ENCODE measurements at regions of chr1 and their contacts with region 1.

Region 1: GRCh38 chr1:108643492-108644335 is 17.2 kb downstream of the HENMT1 start:
- DNase-seq: peak in 10 of 14 experiments; percentile 32 to 86 (median 48)
- ATAC-seq: peak; percentile 24
- H3K4me3 ChIP-seq: no peak overlapping the region
- H3K4me3 Mint-ChIP-seq: peak overlapping the region; percentile 25
- H3K27ac ChIP-seq: peak overlapping the region; percentile 18 to 74
- H3K27ac Mint-ChIP-seq: peak overlapping the region; percentile 96
- H3K4me1 ChIP-seq: peaks cover 61% of the 10 kb centered on the region
- H3K4me1 Mint-ChIP-seq: peaks cover 80% of the 10 kb centered on the region
- H3K27me3 ChIP-seq: no peaks in the 10 kb centered on the region
- H3K27me3 Mint-ChIP-seq: no peaks in the 10 kb centered on the region
- CTCF ChIP-seq: peak; percentile 77

Region 2: DNA sequence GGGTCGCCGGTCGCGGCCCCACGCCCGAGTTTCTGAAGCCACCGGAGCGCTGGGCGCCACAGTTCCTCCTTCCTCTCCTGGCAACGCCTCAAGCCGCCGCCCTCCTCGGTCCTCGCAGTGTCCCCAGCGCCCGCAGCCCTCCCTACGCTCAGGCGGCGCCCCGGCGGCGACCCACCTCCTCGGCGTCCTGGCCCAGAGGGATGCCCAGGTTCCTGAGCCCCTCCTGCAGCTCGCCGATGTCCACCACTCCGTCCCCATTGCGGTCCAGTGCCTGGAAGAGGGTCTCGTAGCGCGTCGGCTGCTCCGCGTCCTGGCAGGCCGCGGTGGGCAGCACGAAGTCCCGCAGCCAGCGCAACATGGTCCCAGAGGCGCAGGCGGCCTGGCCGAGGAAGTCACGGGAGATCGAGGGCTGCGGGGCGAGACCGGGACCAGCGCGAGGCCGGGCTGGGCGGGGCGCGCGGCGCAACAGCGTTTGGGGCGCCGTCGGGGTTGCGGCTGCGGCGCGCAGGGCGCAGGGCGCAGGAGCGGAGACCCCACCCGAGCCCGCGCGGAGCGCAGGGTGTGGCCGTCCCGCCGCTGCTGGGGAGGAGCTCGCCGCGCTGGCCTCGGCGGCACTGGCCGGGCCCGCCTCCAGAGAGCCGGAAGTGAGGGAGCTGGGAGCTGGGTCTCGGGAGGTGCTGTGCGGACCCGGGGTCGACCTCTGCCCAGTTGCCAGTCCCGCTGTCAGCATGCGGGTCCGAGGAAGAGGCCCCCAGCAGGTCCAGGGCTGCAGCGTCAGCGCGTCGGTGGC is 443.7 kb before region 1 on chr1 and contains the start of gene SLC25A24:
- CTCF ChIA-PET with region 1: no interaction called
- POLR2A ChIA-PET with region 1: interaction called, 16 read pairs
- intact Hi-C with region 1: loop called in 1 of 2 experiments (anchors 5 kb)
- DNase-seq: peak; percentile 51 to 89 (median 69)
- ATAC-seq: peak; percentile 92
- H3K4me3 ChIP-seq: peak within 1 kb of the TSS; percentile 97
- H3K4me3 Mint-ChIP-seq: peak within 1 kb of the TSS; percentile 94
- H3K27ac ChIP-seq: peak within 1 kb of the TSS; percentile 42 to 79
- H3K27ac Mint-ChIP-seq: peak within 1 kb of the TSS; percentile 83
- H3K4me1 ChIP-seq: peaks cover 16% of the 10 kb centered on the region
- H3K4me1 Mint-ChIP-seq: peaks cover 34% of the 10 kb centered on the region
- H3K27me3 ChIP-seq: no peaks in the 10 kb centered on the region
- H3K27me3 Mint-ChIP-seq: no peaks in the 10 kb centered on the region
- CTCF ChIP-seq: no peak
- total RNA-seq, gene SLC25A24: 4.9 to 5.5 TPM

Region 3: DNA sequence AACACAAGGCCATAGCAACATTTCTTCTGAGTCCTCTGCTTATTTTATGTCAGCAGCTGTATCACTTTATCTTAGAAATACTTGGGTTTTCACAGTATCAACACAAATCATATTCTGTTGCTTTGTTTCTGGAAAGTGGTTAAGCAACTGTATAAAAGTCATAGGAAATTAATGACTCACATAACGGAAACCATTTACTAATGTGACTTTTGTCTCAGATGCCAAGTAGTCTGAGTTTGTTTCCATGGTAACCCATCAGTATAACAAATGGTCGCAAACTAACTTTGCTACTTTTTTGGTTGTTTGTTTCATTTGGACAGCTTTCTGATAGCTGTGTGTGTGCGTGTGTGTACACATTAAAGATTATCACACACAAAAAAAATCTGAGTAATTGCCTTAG is 52.8 kb before region 1 on chr1:
- CTCF ChIA-PET with region 1: interaction called, 5 read pairs
- POLR2A ChIA-PET with region 1: interaction called, 6 read pairs
- intact Hi-C with region 1: loop called in 1 of 2 experiments (anchors 1 kb)
- DNase-seq: peak in 4 of 14 experiments; percentile 26 to 90 (median 84)
- ATAC-seq: peak; percentile 83
- H3K4me3 ChIP-seq: no peak overlapping the region
- H3K4me3 Mint-ChIP-seq: peak overlapping the region; percentile 20
- H3K27ac ChIP-seq: peak overlapping the region; percentile 33 to 83
- H3K27ac Mint-ChIP-seq: peak overlapping the region; percentile 48
- H3K4me1 ChIP-seq: peaks cover 23% of the 10 kb centered on the region
- H3K4me1 Mint-ChIP-seq: peaks cover 63% of the 10 kb centered on the region
- H3K27me3 ChIP-seq: no peaks in the 10 kb centered on the region
- H3K27me3 Mint-ChIP-seq: no peaks in the 10 kb centered on the region
- CTCF ChIP-seq: no peak

Region 4: DNA sequence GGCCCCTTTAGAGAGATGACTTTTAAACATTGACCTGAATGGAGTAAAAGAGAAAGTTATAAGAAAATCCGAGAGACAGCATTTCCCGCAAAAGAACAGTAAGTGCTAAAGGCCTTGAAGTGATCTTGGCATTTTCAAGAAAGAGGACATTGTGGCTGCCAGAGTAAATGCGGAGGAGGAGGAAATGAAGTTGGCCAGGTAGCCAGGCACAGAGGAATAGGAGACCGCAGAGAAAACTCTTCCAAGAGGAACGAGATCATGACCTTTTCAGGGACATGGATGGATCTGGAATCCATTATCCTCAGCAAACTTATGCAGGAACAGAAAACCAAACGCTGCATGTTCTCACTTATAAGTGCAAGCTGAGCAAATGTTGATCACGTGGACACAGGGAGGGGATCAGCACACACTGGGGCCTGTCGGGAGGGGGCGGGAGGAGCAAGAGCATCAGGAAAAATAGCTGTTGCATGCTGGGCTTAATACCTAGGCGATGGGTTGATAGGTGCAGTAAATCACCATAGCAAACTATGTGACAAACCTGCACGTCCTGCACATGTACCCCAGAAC is 34.1 kb before region 1 on chr1:
- CTCF ChIA-PET with region 1: no interaction called
- POLR2A ChIA-PET with region 1: no interaction called
- intact Hi-C with region 1: no loop called
- DNase-seq: no peak
- ATAC-seq: no peak
- H3K4me3 ChIP-seq: no peak overlapping the region
- H3K4me3 Mint-ChIP-seq: no peak overlapping the region
- H3K27ac ChIP-seq: no peak overlapping the region
- H3K27ac Mint-ChIP-seq: no peak overlapping the region
- H3K4me1 ChIP-seq: no peaks in the 10 kb centered on the region
- H3K4me1 Mint-ChIP-seq: no peaks in the 10 kb centered on the region
- H3K27me3 ChIP-seq: no peaks in the 10 kb centered on the region
- H3K27me3 Mint-ChIP-seq: no peaks in the 10 kb centered on the region
- CTCF ChIP-seq: no peak

Region 5: DNA sequence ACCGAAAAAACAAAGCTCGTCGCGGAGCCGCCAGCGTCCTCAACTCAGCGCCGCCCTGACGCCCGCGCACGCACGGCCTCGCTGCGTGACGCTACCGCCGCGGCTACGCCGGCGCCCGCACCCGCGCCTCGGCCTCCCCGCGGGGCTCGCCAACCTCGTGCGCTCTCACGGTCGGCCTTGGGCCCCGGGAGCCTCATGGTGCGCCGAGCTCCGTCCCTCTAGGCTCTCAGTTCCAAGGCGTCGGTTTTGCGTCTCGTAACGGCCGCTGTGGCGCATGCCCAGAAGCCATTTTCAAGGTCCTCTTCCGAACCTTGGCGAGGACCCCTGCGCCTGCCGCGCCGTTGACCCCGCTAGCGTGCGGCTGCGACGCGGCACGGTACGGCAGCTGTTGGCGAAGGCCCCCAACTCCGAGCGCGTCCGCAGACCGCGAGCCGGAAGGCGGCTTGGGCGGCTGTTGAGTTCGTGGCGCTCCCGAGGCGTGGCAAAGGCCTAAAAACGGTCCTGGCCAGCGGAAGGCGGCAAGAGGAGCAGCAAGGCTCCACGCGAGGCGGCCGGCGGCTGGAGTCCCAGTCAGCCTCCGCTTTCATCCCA is 17.4 kb after region 1 on chr1 and contains the start of gene HENMT1:
- CTCF ChIA-PET with region 1: interaction called, 10 read pairs
- POLR2A ChIA-PET with region 1: interaction called, 484 read pairs
- intact Hi-C with region 1: loop called (anchors 1 to 2 kb)
- DNase-seq: peak; percentile 65 to 95 (median 76)
- ATAC-seq: peak; percentile 88
- H3K4me3 ChIP-seq: peak within 1 kb of the TSS; percentile 65
- H3K4me3 Mint-ChIP-seq: peak within 1 kb of the TSS; percentile 82
- H3K27ac ChIP-seq: peak within 1 kb of the TSS; percentile 95 to 96
- H3K27ac Mint-ChIP-seq: peak within 1 kb of the TSS; percentile 99
- H3K4me1 ChIP-seq: peaks cover 12% of the 10 kb centered on the region
- H3K4me1 Mint-ChIP-seq: peaks cover 43% of the 10 kb centered on the region
- H3K27me3 ChIP-seq: no peaks in the 10 kb centered on the region
- H3K27me3 Mint-ChIP-seq: no peaks in the 10 kb centered on the region
- CTCF ChIP-seq: no peak
- total RNA-seq, gene HENMT1: 6.3 to 8.2 TPM

Region 6: GRCh38 chr1:108746372-108747205 is 102.9 kb after region 1 on chr1 and contains the start of gene STXBP3:
- CTCF ChIA-PET with region 1: interaction called, 3 read pairs
- POLR2A ChIA-PET with region 1: no interaction called
- intact Hi-C with region 1: loop called in 1 of 2 experiments (anchors 5 kb)
- DNase-seq: peak; percentile 99 to 100 (median 100)
- ATAC-seq: peak; percentile 95
- H3K4me3 ChIP-seq: peak within 1 kb of the TSS; percentile 92
- H3K4me3 Mint-ChIP-seq: peak within 1 kb of the TSS; percentile 97
- H3K27ac ChIP-seq: peak within 1 kb of the TSS; percentile 90 to 95
- H3K27ac Mint-ChIP-seq: peak within 1 kb of the TSS; percentile 91
- H3K4me1 ChIP-seq: peaks cover 14% of the 10 kb centered on the region
- H3K4me1 Mint-ChIP-seq: peaks cover 44% of the 10 kb centered on the region
- H3K27me3 ChIP-seq: no peaks in the 10 kb centered on the region
- H3K27me3 Mint-ChIP-seq: no peaks in the 10 kb centered on the region
- CTCF ChIP-seq: peak; percentile 92
- total RNA-seq, gene STXBP3: 41.6 to 50.5 TPM